ENCODE measurements at regions of chr9 and their contacts with region 1.

Region 1: GRCh38 chr9:113963017-113963620 is 87.0 kb downstream of the ZNF618 start:
- DNase-seq: peak in 1 of 2 donors; percentile 31
- ATAC-seq: no peak
- H3K4me3 ChIP-seq: no peak overlapping the region
- H3K27ac ChIP-seq: no peak overlapping the region
- H3K4me1 ChIP-seq: peaks cover 0 to 7% (median 2%) of the 10 kb centered on the region in 9 donors
- H3K27me3 ChIP-seq: no peaks in the 10 kb centered on the region
- CTCF ChIP-seq: peak; percentile 10 to 70 (median 57)

Region 2: DNA sequence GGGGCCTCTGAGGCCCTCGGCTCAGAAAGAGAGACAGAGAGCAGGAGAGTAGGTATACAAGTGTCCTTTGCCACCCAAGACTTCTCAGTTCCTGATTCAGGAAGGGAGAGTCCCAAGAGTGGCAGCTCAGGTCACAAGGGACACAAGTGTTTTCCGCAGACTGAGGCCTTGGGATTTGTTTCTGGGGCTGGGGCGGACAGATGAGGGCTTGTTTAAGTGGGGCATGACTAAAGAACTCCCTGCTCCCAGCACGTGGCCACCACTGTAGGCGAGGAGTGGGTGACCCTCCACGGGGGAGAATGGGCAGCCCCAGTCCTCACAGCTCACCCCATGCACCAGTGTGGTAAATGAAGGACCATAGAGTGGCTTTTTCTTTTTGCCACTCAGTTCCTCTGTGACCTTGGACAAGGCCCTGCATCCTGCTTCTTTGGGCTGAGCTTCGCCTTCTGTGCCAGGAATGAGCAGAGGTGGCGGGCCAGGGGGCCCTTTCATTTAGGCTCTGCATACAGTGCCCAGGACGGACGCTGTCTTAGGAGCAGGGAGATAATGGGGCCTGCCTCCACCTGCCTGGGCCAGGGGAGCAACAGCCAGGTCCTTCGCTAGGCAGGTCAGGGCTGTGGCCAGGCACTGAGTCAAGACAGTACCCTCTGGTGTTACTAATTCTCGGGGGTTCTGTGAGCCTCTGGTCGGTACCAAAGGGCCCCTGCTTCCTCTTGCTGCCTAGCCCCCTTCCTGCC is 64.2 kb after region 1 on chr9:
- intact Hi-C with region 1: loop called in 1 of 10 experiments (anchors 10 kb)
- DNase-seq: no peak
- ATAC-seq: no peak
- H3K4me3 ChIP-seq: no peak overlapping the region
- H3K27ac ChIP-seq: no peak overlapping the region
- H3K4me1 ChIP-seq: peaks cover 0 to 3% (median 0%) of the 10 kb centered on the region in 9 donors
- H3K27me3 ChIP-seq: no peaks in the 10 kb centered on the region
- CTCF ChIP-seq: no peak

Region 3: GRCh38 chr9:114263853-114264510 is 300.9 kb after region 1 on chr9:
- intact Hi-C with region 1: no loop called
- DNase-seq: peak in 1 of 2 donors; percentile 49
- ATAC-seq: peak in 5 of 8 donors; percentile 4 to 62 (median 53)
- H3K4me3 ChIP-seq: no peak overlapping the region
- H3K27ac ChIP-seq: no peak overlapping the region
- H3K4me1 ChIP-seq: peaks cover 0 to 13% (median 0%) of the 10 kb centered on the region in 9 donors
- H3K27me3 ChIP-seq: no peaks in the 10 kb centered on the region
- CTCF ChIP-seq: peak in 7 of 9 donors; percentile 14 to 56 (median 41)

Measured in heart right ventricle (tissue), 16 donors.